ENCODE measurements at regions of chr5 and their contacts with region 1.

Region 1: DNA sequence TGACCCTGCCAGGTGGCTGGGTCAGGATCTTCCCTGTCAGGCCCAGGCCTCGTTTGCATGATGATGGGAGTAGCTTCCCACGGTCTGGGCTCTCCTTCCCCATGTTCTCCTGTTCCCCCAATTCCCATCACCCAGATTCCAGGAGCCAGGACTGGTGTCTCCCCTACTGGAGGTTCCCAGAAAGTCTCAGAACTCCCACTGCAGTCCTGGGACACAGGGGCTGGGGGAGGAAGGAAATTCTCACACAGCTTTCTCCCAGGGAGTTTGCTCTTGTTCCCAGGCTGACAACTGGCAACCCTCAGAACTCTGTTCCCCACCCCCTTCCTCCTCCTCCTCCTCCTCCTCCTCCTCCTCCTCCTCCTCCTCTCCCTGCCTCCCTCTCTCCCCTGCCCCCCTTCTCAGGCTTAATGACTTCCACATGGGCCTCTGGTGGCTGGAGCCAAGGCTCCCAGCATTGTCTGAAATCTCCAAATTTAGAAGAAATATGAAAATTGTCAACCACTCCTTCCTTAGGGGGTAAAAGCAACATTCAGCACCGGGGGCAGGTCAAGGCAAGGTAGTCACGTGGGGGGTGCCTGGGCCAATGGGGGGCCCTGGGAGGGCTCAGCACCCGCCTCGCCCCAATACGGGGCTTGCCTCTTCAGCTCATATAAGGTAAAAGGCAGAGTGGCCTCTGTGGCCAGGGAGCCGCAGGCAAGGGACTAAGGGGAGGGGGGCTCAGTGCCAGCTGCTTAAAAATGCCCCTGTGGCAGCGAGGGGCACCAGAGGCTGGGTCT is 27.3 kb upstream of the IL17B start:
- DNase-seq: peak; percentile 94
- ATAC-seq: peak; percentile 70
- H3K4me3 ChIP-seq: peak overlapping the region; percentile 63
- H3K27ac ChIP-seq: peak overlapping the region; percentile 93
- H3K4me1 ChIP-seq: peaks cover 29% of the 10 kb centered on the region
- H3K27me3 ChIP-seq: no peaks in the 10 kb centered on the region
- CTCF ChIP-seq: peak; percentile 23
- POLR2A ChIP-seq: peak; percentile 97
- RAD21 ChIP-seq: 0 out of 2 replicates have a peak, but pooled peaks have one; percentile 5

Region 2: GRCh38 chr5:149175346-149176105 is 230.9 kb before region 1 on chr5:
- CTCF ChIA-PET with region 1: no interaction called
- POLR2A ChIA-PET with region 1: no interaction called
- dilution Hi-C with region 1: no loop called
- in situ Hi-C with region 1: no loop called
- intact Hi-C with region 1: no loop called
- DNase-seq: no peak
- ATAC-seq: no peak
- H3K4me3 ChIP-seq: no peak overlapping the region
- H3K27ac ChIP-seq: peak overlapping the region; percentile 65
- H3K4me1 ChIP-seq: peaks cover 39% of the 10 kb centered on the region
- H3K27me3 ChIP-seq: no peaks in the 10 kb centered on the region
- CTCF ChIP-seq: no peak
- POLR2A ChIP-seq: no peak
- RAD21 ChIP-seq: no peak

Region 3: GRCh38 chr5:149381987-149382340 is 24.4 kb before region 1 on chr5:
- CTCF ChIA-PET with region 1: interaction called, 6 read pairs
- POLR2A ChIA-PET with region 1: interaction called, 3 read pairs
- dilution Hi-C with region 1: no loop called
- in situ Hi-C with region 1: no loop called
- intact Hi-C with region 1: loop called (anchors 1 kb)
- DNase-seq: peak; percentile 66
- ATAC-seq: peak; percentile 93
- H3K4me3 ChIP-seq: no peak overlapping the region
- H3K27ac ChIP-seq: peak overlapping the region; percentile 50; the same call in 1 of the 2 replicates
- H3K4me1 ChIP-seq: peaks cover 22% of the 10 kb centered on the region
- H3K27me3 ChIP-seq: no peaks in the 10 kb centered on the region
- CTCF ChIP-seq: peak; percentile 92
- POLR2A ChIP-seq: no peak
- RAD21 ChIP-seq: peak; percentile 90

Region 4: GRCh38 chr5:149422366-149423048 is 16.1 kb after region 1 on chr5:
- CTCF ChIA-PET with region 1: interaction called, 6 read pairs
- POLR2A ChIA-PET with region 1: interaction called, 42 read pairs
- dilution Hi-C with region 1: no loop called
- in situ Hi-C with region 1: no loop called
- intact Hi-C with region 1: loop called (anchors 2 kb)
- DNase-seq: peak; percentile 95
- ATAC-seq: peak; percentile 66
- H3K4me3 ChIP-seq: no peak overlapping the region
- H3K27ac ChIP-seq: peak overlapping the region; percentile 99
- H3K4me1 ChIP-seq: peaks cover 70% of the 10 kb centered on the region
- H3K27me3 ChIP-seq: no peaks in the 10 kb centered on the region
- CTCF ChIP-seq: no peak
- POLR2A ChIP-seq: peak; percentile 16; the same call in 1 of the 2 replicates
- RAD21 ChIP-seq: peak; percentile 24; the same call in 1 of the 2 replicates